Psoas muscle (tissue), 8 donors: ENCODE measurements at regions of chr9 and their contacts with region 1.

Region 1: DNA sequence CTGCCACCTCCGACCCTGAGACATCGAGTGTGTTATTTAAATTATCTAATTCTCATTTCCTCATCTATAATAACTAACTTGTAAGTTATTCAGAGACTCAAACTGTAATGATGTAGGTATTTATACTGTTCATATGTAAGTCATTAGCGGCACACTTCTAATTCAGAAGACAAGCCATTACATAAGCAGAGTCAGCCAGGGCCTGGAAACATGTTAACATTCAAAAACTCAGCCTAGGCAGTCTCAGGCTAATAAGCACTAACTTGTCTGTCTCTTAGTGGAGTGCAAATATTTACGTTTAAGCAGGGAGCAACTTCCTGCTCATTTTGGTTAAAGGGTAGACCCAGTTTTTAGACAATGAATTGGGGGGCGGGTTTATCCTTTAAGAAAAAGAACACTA is 598.4 kb downstream of the ACTL7B start:
- DNase-seq: no peak
- ATAC-seq: no peak
- H3K4me3 ChIP-seq: no peak overlapping the region
- H3K27ac ChIP-seq: no peak overlapping the region
- H3K4me1 ChIP-seq: no peaks in the 10 kb centered on the region
- H3K27me3 ChIP-seq: no peaks in the 10 kb centered on the region
- CTCF ChIP-seq: no peak

Region 2: GRCh38 chr9:108105885-108106284 is 151.5 kb before region 1 on chr9:
- intact Hi-C with region 1: loop called in 1 of 2 experiments (anchors 10 kb)
- DNase-seq: peak in 1 of 2 donors; percentile 55
- ATAC-seq: no peak
- H3K4me3 ChIP-seq: no peak overlapping the region
- H3K27ac ChIP-seq: no peak overlapping the region
- H3K4me1 ChIP-seq: no peaks in the 10 kb centered on the region
- H3K27me3 ChIP-seq: no peaks in the 10 kb centered on the region
- CTCF ChIP-seq: no peak

Region 3: DNA sequence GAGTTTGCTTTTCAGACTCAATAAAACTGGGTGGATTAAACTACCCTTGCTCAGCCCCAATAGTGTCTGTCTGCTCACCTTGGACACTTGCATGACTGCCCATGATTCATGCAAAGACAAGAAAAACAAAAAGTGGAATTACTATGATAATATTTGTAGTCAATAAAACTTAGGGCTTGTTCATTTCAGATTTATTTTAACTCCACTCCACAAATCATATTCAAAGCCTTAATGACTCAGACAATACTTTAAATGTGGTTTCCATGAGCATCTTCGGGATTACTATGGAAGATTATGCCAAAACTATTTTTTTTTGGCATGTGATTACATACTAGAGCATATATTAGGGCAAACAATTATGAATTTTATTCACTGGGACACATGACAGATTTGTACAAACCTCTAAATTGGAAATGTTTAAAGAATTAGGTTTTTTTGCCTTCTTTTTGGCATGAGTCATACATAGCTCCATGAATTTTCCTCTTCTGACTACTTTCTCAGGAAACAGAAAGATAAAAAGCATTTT is 129.5 kb after region 1 on chr9:
- intact Hi-C with region 1: no loop called
- DNase-seq: no peak
- ATAC-seq: no peak
- H3K4me3 ChIP-seq: no peak overlapping the region
- H3K27ac ChIP-seq: no peak overlapping the region
- H3K4me1 ChIP-seq: no peaks in the 10 kb centered on the region
- H3K27me3 ChIP-seq: no peaks in the 10 kb centered on the region
- CTCF ChIP-seq: no peak

Region 4: GRCh38 chr9:109579191-109579948 is 1322.0 kb after region 1 on chr9:
- intact Hi-C with region 1: no loop called
- DNase-seq: no peak
- ATAC-seq: no peak
- H3K4me3 ChIP-seq: no peak overlapping the region
- H3K27ac ChIP-seq: no peak overlapping the region
- H3K4me1 ChIP-seq: no peaks in the 10 kb centered on the region
- H3K27me3 ChIP-seq: no peaks in the 10 kb centered on the region
- CTCF ChIP-seq: no peak